ENCODE measurements at regions of chr19 and their contacts with region 1.

Region 1: GRCh38 chr19:41144403-41144802 is 30.2 kb downstream of the CYP2F1 start:
- H3K4me3 Mint-ChIP-seq: no peak overlapping the region
- H3K27ac Mint-ChIP-seq: no peak overlapping the region
- H3K4me1 Mint-ChIP-seq: no peaks in the 10 kb centered on the region
- H3K27me3 Mint-ChIP-seq: peaks cover 27% of the 10 kb centered on the region

Region 2: DNA sequence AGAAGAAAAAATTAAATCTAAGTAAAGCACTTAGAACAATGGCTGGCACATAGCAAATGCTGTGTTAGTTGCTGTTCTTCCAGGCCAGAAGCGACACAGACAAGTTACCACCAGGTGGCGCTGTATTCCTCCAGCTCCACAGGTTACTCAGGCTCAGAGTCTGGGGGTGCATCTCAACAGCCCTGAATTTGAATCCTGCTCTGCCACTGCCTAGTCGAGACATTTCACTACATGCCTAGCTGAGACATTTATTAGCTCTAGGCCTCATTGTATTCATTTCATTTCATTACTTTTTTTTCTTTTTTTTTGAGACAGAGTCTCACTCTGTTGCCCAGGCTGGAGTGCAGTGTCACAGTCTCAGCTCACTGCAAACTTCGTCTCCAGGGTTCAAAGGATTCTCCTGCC is 169.8 kb before region 1 on chr19:
- intact Hi-C with region 1: loop called (anchors 2 kb)
- H3K4me3 Mint-ChIP-seq: no peak overlapping the region
- H3K27ac Mint-ChIP-seq: no peak overlapping the region
- H3K4me1 Mint-ChIP-seq: no peaks in the 10 kb centered on the region
- H3K27me3 Mint-ChIP-seq: peaks cover 33% of the 10 kb centered on the region

Region 3: DNA sequence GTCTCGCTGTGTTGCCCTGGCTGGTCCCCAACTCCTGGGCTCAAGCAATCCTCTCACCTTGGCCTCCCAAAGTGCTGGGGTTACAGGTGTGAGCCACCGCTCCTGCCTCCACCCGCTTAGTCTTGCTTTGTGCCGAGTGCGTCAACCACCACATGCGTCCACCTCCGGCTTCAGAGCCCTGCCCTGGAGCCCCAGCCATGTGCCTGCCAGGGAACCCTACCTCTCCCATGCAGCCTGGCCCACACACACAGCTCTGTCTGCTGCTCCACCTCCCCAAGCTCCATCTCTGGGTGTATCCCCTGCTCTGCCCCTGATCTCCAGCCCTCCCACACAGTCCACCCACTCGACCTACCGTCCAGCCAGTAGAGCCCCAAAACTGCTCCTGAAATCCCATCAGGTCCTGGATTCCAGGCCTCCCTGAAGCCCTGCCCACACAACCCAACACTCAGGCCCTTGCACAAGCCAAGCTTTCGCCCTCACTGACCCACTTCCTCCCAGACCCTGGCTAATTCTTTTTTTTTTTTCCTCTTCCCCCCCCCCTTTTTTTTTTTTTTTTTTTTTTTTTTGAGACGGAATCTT is 20.6 kb before region 1 on chr19:
- intact Hi-C with region 1: loop called (anchors 1 kb)
- H3K4me3 Mint-ChIP-seq: no peak overlapping the region
- H3K27ac Mint-ChIP-seq: no peak overlapping the region
- H3K4me1 Mint-ChIP-seq: peaks cover 39% of the 10 kb centered on the region
- H3K27me3 Mint-ChIP-seq: peaks cover 21% of the 10 kb centered on the region